SK-N-SH (cell line): ENCODE measurements at regions of chr7 and their contacts with region 1.

Region 1: GRCh38 chr7:124113045-124113444 is 80.2 kb upstream of the TMEM229A start:
- DNase-seq: no peak
- H3K4me3 ChIP-seq: no peak overlapping the region
- H3K27ac ChIP-seq: no peak overlapping the region
- H3K4me1 ChIP-seq: no peaks in the 10 kb centered on the region; a peak in 2 of 4 replicates
- H3K27me3 ChIP-seq: no peaks in the 10 kb centered on the region
- CTCF ChIP-seq: no peak
- EP300 ChIP-seq: no peak
- RAD21 ChIP-seq: no peak

Region 2: DNA sequence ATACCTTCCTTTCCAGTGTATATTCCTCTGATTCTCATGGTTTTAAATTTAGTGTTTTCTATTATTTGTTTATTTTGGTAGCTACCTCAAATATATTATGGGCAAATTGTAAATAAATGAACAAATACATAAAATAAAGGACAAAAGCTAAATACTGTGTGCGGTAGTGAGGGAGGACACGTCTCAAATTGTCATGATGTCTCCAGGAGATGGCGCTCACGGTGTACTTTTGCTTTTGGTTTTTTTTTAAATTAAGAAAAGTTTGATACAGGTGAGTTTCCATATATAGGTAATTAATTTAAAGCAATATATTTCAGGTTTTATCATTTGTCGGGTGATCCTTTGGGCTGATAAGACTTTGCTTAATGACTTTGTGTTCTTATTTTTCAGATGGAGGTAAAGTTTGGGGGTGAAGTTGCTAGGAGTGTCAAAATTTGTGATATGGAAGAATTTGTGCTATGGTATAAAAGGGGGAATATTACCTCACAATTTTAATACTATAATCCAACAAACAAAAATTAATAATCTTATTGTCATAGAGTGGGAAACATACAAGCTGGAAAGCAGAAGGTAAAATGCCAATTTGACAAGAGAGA is 11.8 kb before region 1 on chr7:
- CTCF ChIA-PET with region 1: interaction called, 16 read pairs
- POLR2A ChIA-PET with region 1: no interaction called
- DNase-seq: peak; percentile 33
- H3K4me3 ChIP-seq: no peak overlapping the region
- H3K27ac ChIP-seq: no peak overlapping the region; a peak in 1 of 4 replicates
- H3K4me1 ChIP-seq: no peaks in the 10 kb centered on the region; a peak in 1 of 4 replicates
- H3K27me3 ChIP-seq: no peaks in the 10 kb centered on the region
- CTCF ChIP-seq: peak; percentile 69
- EP300 ChIP-seq: no peak
- RAD21 ChIP-seq: peak; percentile 64

Region 3: DNA sequence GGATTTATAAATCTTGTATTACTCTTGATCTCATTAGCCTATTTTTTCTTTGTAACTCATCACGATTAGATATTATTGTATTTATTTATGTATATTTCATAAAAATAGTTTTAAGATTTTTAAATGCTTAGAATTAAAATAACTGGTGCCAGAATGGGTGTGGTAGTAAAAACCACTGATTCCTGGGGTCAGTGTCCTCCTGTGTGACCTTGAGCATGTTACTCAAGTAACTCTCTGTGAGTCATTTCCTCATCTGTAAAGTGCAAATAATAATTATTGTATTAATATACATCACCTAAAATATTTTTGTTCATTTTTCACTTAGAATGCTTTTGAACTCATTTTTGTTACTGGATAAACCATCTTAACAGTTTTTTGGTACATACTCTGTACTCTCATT is 11.2 kb after region 1 on chr7:
- CTCF ChIA-PET with region 1: no interaction called
- POLR2A ChIA-PET with region 1: no interaction called
- DNase-seq: no peak
- H3K4me3 ChIP-seq: no peak overlapping the region
- H3K27ac ChIP-seq: no peak overlapping the region
- H3K4me1 ChIP-seq: no peaks in the 10 kb centered on the region
- H3K27me3 ChIP-seq: no peaks in the 10 kb centered on the region
- CTCF ChIP-seq: no peak
- EP300 ChIP-seq: no peak
- RAD21 ChIP-seq: no peak

Region 4: GRCh38 chr7:124364283-124364682 is 251.2 kb after region 1 on chr7:
- CTCF ChIA-PET with region 1: no interaction called
- POLR2A ChIA-PET with region 1: no interaction called
- DNase-seq: no peak
- H3K4me3 ChIP-seq: no peak overlapping the region
- H3K27ac ChIP-seq: no peak overlapping the region
- H3K4me1 ChIP-seq: no peaks in the 10 kb centered on the region
- H3K27me3 ChIP-seq: no peaks in the 10 kb centered on the region
- CTCF ChIP-seq: no peak
- EP300 ChIP-seq: no peak
- RAD21 ChIP-seq: no peak